ENCODE measurements at regions of chr3 and their contacts with region 1.

Region 1: DNA sequence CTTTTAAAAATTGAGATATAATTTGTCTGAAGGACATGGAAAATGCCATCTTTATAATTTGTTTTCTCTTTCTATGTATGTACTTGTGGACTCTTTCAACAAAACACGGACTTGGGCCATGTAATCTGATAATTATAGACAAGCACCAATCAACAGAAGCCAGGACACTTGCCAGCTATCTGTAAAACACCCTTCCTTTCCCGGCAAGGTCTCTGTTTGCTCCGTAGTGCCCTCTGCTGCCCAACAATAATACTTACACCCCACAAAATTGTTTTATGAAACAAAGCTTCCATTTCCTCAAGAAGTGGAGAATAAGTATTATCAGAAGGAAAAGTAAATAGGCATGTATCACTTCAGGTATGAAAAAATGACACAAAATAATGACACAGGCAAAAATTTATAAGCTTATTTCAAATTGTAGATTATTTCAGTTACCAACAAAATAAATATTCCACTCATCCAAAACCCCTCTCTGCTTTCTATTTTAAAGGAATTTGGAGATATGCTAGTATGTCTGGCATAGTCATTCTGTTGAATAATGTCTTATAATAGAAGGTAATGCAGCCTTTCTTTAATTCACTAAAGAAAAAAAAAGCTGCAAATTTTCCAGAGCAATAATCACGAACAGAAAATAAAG is 32.8 kb downstream of the MYH15 start:
- DNase-seq: peak; percentile 77
- H3K4me3 ChIP-seq: no peak overlapping the region
- H3K27ac ChIP-seq: no peak overlapping the region
- H3K4me1 ChIP-seq: peaks cover 2% of the 10 kb centered on the region
- H3K27me3 ChIP-seq: no peaks in the 10 kb centered on the region
- CTCF ChIP-seq: peak; percentile 55 to 57
- POLR2A ChIP-seq: no peak

Region 2: GRCh38 chr3:107676469-107677309 is 800.9 kb before region 1 on chr3:
- CTCF ChIA-PET with region 1: interaction called, 18 read pairs
- POLR2A ChIA-PET with region 1: no interaction called
- dilution Hi-C with region 1: no loop called
- intact Hi-C with region 1: no loop called
- DNase-seq: peak; percentile 42
- H3K4me3 ChIP-seq: no peak overlapping the region
- H3K27ac ChIP-seq: no peak overlapping the region
- H3K4me1 ChIP-seq: no peaks in the 10 kb centered on the region
- H3K27me3 ChIP-seq: no peaks in the 10 kb centered on the region
- CTCF ChIP-seq: peak; percentile 20 to 31
- POLR2A ChIP-seq: no peak

Region 3: DNA sequence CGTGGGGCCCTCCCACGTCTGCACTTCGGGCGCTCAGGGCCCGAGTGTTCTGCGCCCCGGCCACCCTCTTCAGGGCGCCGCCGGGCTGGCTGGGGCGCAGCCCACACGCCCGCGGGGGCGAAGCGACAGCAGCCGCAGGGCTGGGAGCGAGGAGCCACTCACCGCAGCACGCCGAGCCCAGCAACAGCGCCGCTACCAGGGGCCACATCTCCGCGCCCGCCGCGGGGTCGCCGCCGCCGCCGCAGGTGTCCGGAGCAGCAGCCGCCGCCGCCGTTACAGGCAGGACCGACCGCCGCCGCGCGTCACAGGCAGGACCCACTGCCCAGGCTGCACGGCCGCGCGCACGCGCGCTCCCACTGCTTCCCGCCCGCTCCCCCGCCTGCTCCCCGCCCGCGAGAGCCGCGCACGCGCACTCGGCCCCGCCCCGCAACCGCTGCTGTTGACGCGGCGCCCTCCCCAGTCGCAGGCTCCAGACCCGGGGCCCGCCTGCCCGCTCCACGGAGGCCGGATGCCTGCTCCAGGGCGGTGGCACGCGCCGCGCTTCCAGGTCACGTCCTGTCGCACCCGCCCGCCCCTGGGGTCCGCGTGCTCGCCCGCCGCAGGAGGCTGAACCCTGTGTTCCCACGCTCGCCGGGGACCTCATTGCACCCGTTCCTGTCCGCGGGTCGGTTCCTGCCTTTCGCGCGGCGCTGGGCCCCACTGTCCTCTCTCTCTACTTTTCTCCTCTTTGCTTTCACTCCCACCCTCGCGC is 386.8 kb before region 1 on chr3 and contains the start of gene CD47:
- CTCF ChIA-PET with region 1: interaction called, 8 read pairs
- POLR2A ChIA-PET with region 1: no interaction called
- dilution Hi-C with region 1: no loop called
- intact Hi-C with region 1: loop called (anchors 5 kb)
- DNase-seq: peak; percentile 94
- H3K4me3 ChIP-seq: peak within 1 kb of the TSS; percentile 82 to 93 (median 90)
- H3K27ac ChIP-seq: peak within 1 kb of the TSS; percentile 51
- H3K4me1 ChIP-seq: peaks cover 12% of the 10 kb centered on the region
- H3K27me3 ChIP-seq: peaks cover 2 to 6% of the 10 kb centered on the region in 2 experiments
- CTCF ChIP-seq: no peak
- POLR2A ChIP-seq: peak; percentile 74
- total RNA-seq, gene CD47: 30.3 and 32.2 TPM in 2 replicates

Region 4: GRCh38 chr3:108159865-108160264 is 317.8 kb before region 1 on chr3:
- CTCF ChIA-PET with region 1: interaction called, 10 read pairs
- POLR2A ChIA-PET with region 1: no interaction called
- dilution Hi-C with region 1: no loop called
- intact Hi-C with region 1: no loop called
- DNase-seq: peak; percentile 49
- H3K4me3 ChIP-seq: no peak overlapping the region
- H3K27ac ChIP-seq: no peak overlapping the region
- H3K4me1 ChIP-seq: peaks cover 26% of the 10 kb centered on the region
- H3K27me3 ChIP-seq: no peaks in the 10 kb centered on the region
- CTCF ChIP-seq: no peak
- POLR2A ChIP-seq: no peak

Region 5: DNA sequence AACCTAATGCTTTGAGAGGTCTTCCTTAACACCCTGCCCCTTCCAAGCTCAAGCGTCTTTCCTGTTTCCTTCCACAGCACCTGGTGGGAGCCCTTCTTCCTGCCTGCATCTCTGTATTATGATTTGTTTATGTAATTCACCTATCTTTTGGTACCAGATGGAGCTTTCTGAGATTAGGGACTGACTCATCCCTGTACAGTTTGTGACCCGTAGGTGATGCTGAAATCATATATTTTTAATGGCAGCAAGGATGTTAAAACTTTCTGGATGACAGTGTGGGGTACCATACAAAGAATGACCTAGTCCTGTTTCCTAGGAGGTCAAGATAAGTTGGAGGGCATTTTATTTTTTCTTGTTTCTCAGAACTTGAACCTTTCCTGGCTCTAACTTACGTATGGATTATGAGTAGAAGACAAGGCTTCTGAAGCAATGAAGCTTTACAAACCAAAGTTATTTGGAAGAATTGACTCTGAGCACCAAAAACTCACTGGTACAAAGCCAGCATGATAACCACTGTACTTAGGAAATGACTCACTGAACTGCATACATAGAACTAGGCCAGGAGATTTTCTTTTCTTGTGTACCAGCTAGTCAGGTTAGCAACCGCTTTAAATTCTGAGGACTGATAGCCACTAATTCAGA is 134.7 kb before region 1 on chr3:
- CTCF ChIA-PET with region 1: no interaction called
- POLR2A ChIA-PET with region 1: no interaction called
- dilution Hi-C with region 1: no loop called
- intact Hi-C with region 1: loop called (anchors 10 kb)
- DNase-seq: peak; percentile 70
- H3K4me3 ChIP-seq: no peak overlapping the region
- H3K27ac ChIP-seq: peak overlapping the region; percentile 36
- H3K4me1 ChIP-seq: peaks cover 15% of the 10 kb centered on the region
- H3K27me3 ChIP-seq: no peaks in the 10 kb centered on the region
- CTCF ChIP-seq: no peak
- POLR2A ChIP-seq: no peak

Region 6: GRCh38 chr3:108441071-108441507 is 36.5 kb before region 1 on chr3:
- CTCF ChIA-PET with region 1: interaction called, 10 read pairs
- POLR2A ChIA-PET with region 1: no interaction called
- dilution Hi-C with region 1: no loop called
- intact Hi-C with region 1: no loop called
- DNase-seq: no peak
- H3K4me3 ChIP-seq: no peak overlapping the region
- H3K27ac ChIP-seq: no peak overlapping the region
- H3K4me1 ChIP-seq: no peaks in the 10 kb centered on the region
- H3K27me3 ChIP-seq: no peaks in the 10 kb centered on the region
- CTCF ChIP-seq: no peak
- POLR2A ChIP-seq: no peak

Region 7: GRCh38 chr3:108489771-108490170 is 12.1 kb after region 1 on chr3:
- CTCF ChIA-PET with region 1: interaction called, 50 read pairs
- POLR2A ChIA-PET with region 1: no interaction called
- dilution Hi-C with region 1: no loop called
- intact Hi-C with region 1: no loop called
- DNase-seq: peak; percentile 75
- H3K4me3 ChIP-seq: no peak overlapping the region
- H3K27ac ChIP-seq: no peak overlapping the region
- H3K4me1 ChIP-seq: peaks cover 12% of the 10 kb centered on the region
- H3K27me3 ChIP-seq: no peaks in the 10 kb centered on the region
- CTCF ChIP-seq: peak; percentile 51 to 57
- POLR2A ChIP-seq: no peak